A673 (cell line): ENCODE measurements at regions of chr3 and their contacts with region 1.

Region 1: DNA sequence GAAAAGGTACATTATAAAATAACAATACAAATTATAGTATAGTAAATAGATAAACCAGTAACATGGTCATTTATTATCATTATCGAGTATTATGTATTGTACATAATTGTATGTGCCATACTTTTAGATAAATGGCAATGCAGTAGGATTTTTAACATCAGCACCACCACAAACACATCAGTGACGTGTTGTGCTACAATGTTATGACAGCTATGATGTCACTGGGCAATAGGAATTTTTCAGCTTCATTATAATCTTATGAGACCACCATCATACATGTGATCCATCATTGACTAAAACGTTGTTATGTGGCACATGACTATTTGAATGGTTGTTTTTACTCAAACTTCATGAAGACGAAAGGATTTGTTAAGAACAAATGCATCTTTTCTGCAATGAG is 598.1 kb upstream of the AGTR1 start:
- DNase-seq: no peak
- H3K4me3 ChIP-seq: no peak overlapping the region
- H3K27ac ChIP-seq: no peak overlapping the region
- H3K4me1 ChIP-seq: no peaks in the 10 kb centered on the region
- H3K27me3 ChIP-seq: no peaks in the 10 kb centered on the region
- CTCF ChIP-seq: no peak

Region 2: GRCh38 chr3:146796078-146796477 is 1303.6 kb before region 1 on chr3:
- CTCF ChIA-PET with region 1: interaction called, 10 read pairs
- POLR2A ChIA-PET with region 1: no interaction called
- intact Hi-C with region 1: no loop called
- DNase-seq: no peak
- H3K4me3 ChIP-seq: no peak overlapping the region
- H3K27ac ChIP-seq: no peak overlapping the region
- H3K4me1 ChIP-seq: no peaks in the 10 kb centered on the region
- H3K27me3 ChIP-seq: no peaks in the 10 kb centered on the region
- CTCF ChIP-seq: no peak